Endothelial cell of umbilical vein (primary cell): ENCODE measurements at regions of chr1 and their contacts with region 1.

Region 1: DNA sequence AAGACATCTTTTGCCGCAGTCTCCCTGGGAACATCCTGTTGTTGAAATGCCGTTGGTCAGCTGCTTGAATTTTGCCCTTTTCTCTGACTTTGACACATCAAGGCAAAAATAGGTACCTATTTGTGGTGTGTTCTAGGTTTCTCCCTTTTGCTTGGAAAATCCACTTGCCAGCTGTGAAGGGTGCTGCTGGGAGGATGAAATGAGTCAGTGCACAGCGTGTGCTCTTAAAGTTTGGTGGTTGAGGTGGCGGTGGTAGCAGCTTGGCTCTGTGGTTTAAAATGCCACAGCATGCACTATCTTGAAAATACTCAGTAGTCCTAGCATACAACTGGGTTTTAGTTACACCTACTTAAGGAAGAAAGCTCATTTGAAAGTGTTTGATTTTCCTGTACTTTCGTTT is 183.8 kb downstream of the DHRS3 start:
- DNase-seq: peak; percentile 88
- H3K4me3 ChIP-seq: peak overlapping the region in 1 of 3 experiments; percentile 46
- H3K27ac ChIP-seq: peak overlapping the region; percentile 88
- H3K4me1 ChIP-seq: peaks cover 55% of the 10 kb centered on the region
- H3K27me3 ChIP-seq: no peaks in the 10 kb centered on the region
- CTCF ChIP-seq: no peak
- POLR2A ChIP-seq: no peak

Region 2: DNA sequence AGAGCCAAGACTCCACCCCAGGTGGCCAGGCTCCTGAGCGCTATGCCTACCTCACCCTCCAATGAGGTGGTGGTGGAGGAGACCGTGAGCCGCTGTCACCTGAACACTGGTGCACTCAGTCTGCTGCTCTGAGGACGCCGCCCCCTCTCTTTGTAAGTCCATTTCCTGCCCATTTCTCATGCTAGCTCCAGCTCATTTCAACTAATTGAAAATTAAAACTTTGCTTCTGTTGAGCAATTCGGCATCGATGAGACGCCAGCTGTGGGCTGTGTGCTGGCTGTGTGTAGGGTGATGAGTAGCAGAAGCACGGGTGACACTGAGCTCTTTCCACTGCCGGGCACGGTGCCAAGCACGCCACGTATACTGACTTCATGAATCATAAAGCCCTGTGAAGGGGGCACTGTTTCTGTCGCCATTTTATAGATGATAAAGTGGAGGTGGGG is 256.2 kb before region 1 on chr1:
- CTCF ChIA-PET with region 1: no interaction called
- POLR2A ChIA-PET with region 1: no interaction called
- dilution Hi-C with region 1: no loop called
- intact Hi-C with region 1: no loop called
- DNase-seq: peak; percentile 85
- H3K4me3 ChIP-seq: no peak overlapping the region
- H3K27ac ChIP-seq: peak overlapping the region; percentile 95
- H3K4me1 ChIP-seq: peaks cover 43% of the 10 kb centered on the region
- H3K27me3 ChIP-seq: no peaks in the 10 kb centered on the region
- CTCF ChIP-seq: no peak
- POLR2A ChIP-seq: no peak

Region 3: GRCh38 chr1:12454406-12455391 is 20.5 kb after region 1 on chr1:
- CTCF ChIA-PET with region 1: interaction called, 4 read pairs
- POLR2A ChIA-PET with region 1: interaction called, 9 read pairs
- dilution Hi-C with region 1: no loop called
- intact Hi-C with region 1: loop called (anchors 1 kb)
- DNase-seq: peak; percentile 81
- H3K4me3 ChIP-seq: peak overlapping the region in 1 of 3 experiments; percentile 6
- H3K27ac ChIP-seq: peak overlapping the region; percentile 88
- H3K4me1 ChIP-seq: peaks cover 62% of the 10 kb centered on the region
- H3K27me3 ChIP-seq: no peaks in the 10 kb centered on the region
- CTCF ChIP-seq: no peak
- POLR2A ChIP-seq: no peak

Region 4: GRCh38 chr1:12477936-12478611 is 43.9 kb after region 1 on chr1:
- CTCF ChIA-PET with region 1: interaction called, 9 read pairs
- POLR2A ChIA-PET with region 1: interaction called, 5 read pairs
- dilution Hi-C with region 1: no loop called
- intact Hi-C with region 1: loop called (anchors 1 kb)
- DNase-seq: peak; percentile 96
- H3K4me3 ChIP-seq: no peak overlapping the region
- H3K27ac ChIP-seq: peak overlapping the region; percentile 66
- H3K4me1 ChIP-seq: peaks cover 61% of the 10 kb centered on the region
- H3K27me3 ChIP-seq: no peaks in the 10 kb centered on the region
- CTCF ChIP-seq: no peak
- POLR2A ChIP-seq: no peak

Region 5: GRCh38 chr1:12549460-12550349 is 115.5 kb after region 1 on chr1:
- CTCF ChIA-PET with region 1: no interaction called
- POLR2A ChIA-PET with region 1: no interaction called
- dilution Hi-C with region 1: no loop called
- intact Hi-C with region 1: loop called (anchors 1 kb)
- DNase-seq: peak; percentile 98
- H3K4me3 ChIP-seq: peak overlapping the region in 1 of 3 experiments; percentile 1
- H3K27ac ChIP-seq: peak overlapping the region; percentile 91
- H3K4me1 ChIP-seq: peaks cover 16% of the 10 kb centered on the region
- H3K27me3 ChIP-seq: no peaks in the 10 kb centered on the region
- CTCF ChIP-seq: no peak
- POLR2A ChIP-seq: no peak

Region 6: GRCh38 chr1:12604114-12604874 is 170.1 kb after region 1 on chr1:
- CTCF ChIA-PET with region 1: interaction called, 6 read pairs
- POLR2A ChIA-PET with region 1: no interaction called
- dilution Hi-C with region 1: no loop called
- intact Hi-C with region 1: loop called (anchors 1 kb)
- DNase-seq: peak; percentile 99
- H3K4me3 ChIP-seq: peak overlapping the region in 1 of 3 experiments; percentile 15
- H3K27ac ChIP-seq: peak overlapping the region; percentile 95
- H3K4me1 ChIP-seq: peaks cover 38% of the 10 kb centered on the region
- H3K27me3 ChIP-seq: no peaks in the 10 kb centered on the region
- CTCF ChIP-seq: no peak
- POLR2A ChIP-seq: peak; percentile 38

Region 7: DNA sequence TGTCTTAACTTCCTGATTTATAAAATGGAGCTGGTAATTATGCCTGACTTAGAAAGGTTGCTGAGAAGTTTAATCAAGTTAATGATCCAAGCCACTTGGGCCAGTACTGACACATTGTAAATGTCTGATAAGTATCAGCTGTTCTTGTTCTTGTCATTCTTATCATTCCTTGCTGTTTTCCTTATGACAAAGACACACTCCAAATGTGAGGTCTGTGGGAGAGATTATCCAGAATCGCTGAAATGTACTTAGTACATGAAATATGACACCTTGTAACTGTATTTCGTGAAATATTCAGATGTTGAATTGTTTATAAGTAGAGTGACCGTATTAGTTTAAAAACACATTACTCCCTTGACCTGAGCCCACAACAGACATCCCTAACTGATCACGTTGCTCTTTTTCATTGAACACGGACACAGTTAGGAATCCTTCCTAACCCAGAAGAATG is 215.8 kb after region 1 on chr1:
- CTCF ChIA-PET with region 1: no interaction called
- POLR2A ChIA-PET with region 1: no interaction called
- dilution Hi-C with region 1: no loop called
- intact Hi-C with region 1: no loop called
- DNase-seq: peak; percentile 34
- H3K4me3 ChIP-seq: no peak overlapping the region
- H3K27ac ChIP-seq: no peak overlapping the region
- H3K4me1 ChIP-seq: no peaks in the 10 kb centered on the region
- H3K27me3 ChIP-seq: peaks cover 0 to 3% of the 10 kb centered on the region in 2 experiments
- CTCF ChIP-seq: no peak
- POLR2A ChIP-seq: no peak

Region 8: GRCh38 chr1:13976485-13976884 is 1542.3 kb after region 1 on chr1:
- CTCF ChIA-PET with region 1: no interaction called
- POLR2A ChIA-PET with region 1: no interaction called
- dilution Hi-C with region 1: no loop called
- intact Hi-C with region 1: no loop called
- DNase-seq: no peak
- H3K4me3 ChIP-seq: no peak overlapping the region
- H3K27ac ChIP-seq: no peak overlapping the region
- H3K4me1 ChIP-seq: no peaks in the 10 kb centered on the region
- H3K27me3 ChIP-seq: no peaks in the 10 kb centered on the region
- CTCF ChIP-seq: no peak
- POLR2A ChIP-seq: no peak